ENCODE measurements at regions of chr16 and their contacts with region 1.

Region 1: DNA sequence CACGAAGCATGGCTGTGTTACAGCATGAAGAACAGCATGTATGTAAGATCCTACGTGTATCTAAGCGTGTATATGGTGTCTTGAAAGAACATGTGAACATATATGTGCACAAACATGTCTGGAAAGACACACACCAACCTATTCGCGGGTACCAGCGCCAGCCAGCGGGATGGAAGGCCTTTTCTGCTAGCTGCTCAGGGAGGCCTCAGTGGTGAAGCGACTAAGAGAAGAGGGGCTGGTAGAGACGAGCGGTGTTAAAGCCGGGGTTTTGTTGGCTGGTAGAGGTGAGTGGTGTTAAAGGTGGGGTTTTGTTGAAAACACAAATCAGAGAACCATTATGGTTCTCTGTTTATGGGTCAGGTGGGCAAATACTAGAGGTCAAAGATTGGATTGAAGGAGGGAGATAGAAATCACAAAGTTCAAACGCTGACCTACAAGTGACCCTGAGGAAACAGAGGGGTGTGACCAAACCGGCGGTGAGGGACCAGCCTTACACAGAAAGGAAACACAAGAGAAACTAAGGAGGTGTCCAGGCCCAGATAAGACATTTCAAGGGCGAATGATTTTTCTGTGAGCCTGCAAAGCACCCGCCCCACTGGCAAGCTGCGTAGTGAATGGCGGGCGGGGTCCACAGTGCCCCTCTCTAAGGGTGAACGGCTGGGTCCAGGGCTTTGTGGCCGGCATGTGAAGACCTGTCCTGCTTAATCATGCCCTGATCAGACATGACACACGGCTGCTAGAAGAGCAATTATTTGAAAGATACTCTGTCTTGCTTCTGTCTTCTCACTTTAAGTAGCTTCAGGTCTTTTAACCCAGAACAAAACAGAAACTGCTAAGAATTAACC is 8.1 kb downstream of the ZCCHC14 start:
- DNase-seq: no peak
- H3K4me3 Mint-ChIP-seq: no peak overlapping the region
- H3K27ac Mint-ChIP-seq: peak overlapping the region; percentile 95
- H3K4me1 Mint-ChIP-seq: peaks cover 83% of the 10 kb centered on the region
- H3K27me3 Mint-ChIP-seq: no peaks in the 10 kb centered on the region

Region 2: GRCh38 chr16:87435372-87436224 is 49.1 kb before region 1 on chr16:
- CTCF ChIA-PET with region 1: no interaction called
- intact Hi-C with region 1: loop called (anchors 1 kb)
- DNase-seq: peak; percentile 29
- H3K4me3 Mint-ChIP-seq: peak overlapping the region; percentile 54
- H3K27ac Mint-ChIP-seq: peak overlapping the region; percentile 86
- H3K4me1 Mint-ChIP-seq: peaks cover 32% of the 10 kb centered on the region
- H3K27me3 Mint-ChIP-seq: no peaks in the 10 kb centered on the region

Region 3: DNA sequence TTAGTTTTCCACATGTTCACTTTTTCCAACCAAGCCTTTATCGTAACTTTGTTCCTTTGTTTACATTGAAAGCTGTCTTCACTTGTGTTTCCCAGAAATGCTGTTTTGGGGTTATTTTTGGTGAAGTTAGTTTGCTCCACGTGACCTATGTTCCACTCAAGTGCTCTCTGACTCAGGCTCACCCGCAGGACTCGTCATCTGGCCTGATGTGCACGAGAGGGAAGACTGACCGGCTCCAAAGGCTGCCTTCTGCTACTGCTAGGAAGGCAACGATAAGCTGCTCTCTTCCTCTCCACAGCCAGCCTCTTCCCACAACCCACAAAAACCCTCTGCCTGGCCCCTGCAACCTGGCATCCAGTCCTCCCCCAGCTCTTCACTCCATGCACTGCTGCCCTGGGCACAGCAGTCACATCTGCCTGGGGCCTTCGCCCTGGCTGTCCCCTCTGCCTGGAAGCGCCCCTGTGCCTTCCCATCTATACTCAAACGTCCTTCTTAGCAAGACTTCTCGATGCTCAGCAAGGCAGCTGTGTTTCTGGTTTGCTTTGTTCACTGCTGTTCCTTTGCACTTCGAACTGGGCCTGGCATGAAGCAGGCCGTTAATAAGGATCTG is 19.9 kb before region 1 on chr16:
- CTCF ChIA-PET with region 1: interaction called, 3 read pairs
- intact Hi-C with region 1: loop called (anchors 1 kb)
- DNase-seq: peak; percentile 74
- H3K4me3 Mint-ChIP-seq: peak overlapping the region; percentile 69
- H3K27ac Mint-ChIP-seq: peak overlapping the region; percentile 92
- H3K4me1 Mint-ChIP-seq: peaks cover 51% of the 10 kb centered on the region
- H3K27me3 Mint-ChIP-seq: no peaks in the 10 kb centered on the region